ENCODE measurements at regions of chr16 and their contacts with region 1.

Region 1: GRCh38 chr16:13919683-13920509 is at the start of gene ERCC4:
- DNase-seq: peak; percentile 100
- ATAC-seq: peak; percentile 99
- total RNA-seq, gene ERCC4: 7.2 TPM

Region 2: DNA sequence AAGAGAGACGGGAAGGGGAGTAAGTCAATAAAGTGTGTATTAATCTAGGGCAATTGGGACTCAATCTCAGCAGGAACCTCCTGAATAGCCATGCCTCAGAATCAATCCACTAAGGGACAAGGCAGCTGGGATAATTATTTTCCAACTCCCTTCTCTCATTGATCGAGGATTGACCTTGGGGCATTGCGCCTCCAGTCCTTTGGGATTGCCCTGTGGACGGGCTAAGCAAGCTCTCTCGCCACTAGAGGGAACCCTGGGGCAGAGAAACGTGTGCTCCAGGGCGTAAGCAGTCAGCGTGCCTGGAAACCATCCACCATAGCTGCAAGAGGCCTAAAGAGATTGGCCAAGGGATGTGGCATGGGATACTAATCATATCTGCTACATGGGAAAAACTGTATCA is 53.8 kb before region 1 on chr16:
- intact Hi-C with region 1: loop called (anchors 2 kb)
- DNase-seq: peak; percentile 72
- ATAC-seq: peak; percentile 91

Region 3: DNA sequence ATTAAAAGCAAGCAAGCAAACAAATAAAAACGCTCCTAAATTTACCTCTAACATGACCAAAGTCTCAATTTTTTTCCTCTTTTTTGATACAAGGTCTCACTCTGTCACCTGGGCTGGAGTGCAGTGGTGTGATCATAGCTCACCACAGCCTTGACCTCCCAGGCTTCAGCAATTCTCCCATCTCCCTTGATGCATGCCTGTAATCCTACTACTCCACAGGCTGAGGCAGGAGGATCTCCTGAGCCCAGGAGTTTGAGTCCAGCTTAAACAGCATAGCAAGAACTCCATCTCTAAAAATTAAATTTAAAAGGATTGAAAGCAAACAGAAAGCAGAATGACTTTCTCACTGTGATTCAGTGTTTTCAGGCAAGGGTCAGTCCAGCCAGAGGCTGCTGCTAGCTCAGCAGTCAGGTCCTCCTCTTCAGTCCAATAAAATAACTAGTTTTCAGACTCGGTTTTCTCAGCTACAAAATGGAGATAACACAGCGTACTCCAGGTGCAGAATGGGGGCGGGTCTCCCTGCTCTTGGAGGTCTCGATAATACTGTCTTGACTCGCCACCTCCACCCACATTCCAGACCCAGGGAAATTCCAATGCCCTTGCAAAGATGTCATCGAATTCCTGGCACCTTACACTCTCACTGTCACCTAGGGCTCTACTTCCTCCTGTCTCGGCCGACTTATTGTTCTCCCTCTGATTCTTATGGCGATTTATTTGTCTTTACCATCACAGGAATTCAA is 130.6 kb after region 1 on chr16:
- intact Hi-C with region 1: no loop called
- DNase-seq: no peak
- ATAC-seq: no peak

Region 4: DNA sequence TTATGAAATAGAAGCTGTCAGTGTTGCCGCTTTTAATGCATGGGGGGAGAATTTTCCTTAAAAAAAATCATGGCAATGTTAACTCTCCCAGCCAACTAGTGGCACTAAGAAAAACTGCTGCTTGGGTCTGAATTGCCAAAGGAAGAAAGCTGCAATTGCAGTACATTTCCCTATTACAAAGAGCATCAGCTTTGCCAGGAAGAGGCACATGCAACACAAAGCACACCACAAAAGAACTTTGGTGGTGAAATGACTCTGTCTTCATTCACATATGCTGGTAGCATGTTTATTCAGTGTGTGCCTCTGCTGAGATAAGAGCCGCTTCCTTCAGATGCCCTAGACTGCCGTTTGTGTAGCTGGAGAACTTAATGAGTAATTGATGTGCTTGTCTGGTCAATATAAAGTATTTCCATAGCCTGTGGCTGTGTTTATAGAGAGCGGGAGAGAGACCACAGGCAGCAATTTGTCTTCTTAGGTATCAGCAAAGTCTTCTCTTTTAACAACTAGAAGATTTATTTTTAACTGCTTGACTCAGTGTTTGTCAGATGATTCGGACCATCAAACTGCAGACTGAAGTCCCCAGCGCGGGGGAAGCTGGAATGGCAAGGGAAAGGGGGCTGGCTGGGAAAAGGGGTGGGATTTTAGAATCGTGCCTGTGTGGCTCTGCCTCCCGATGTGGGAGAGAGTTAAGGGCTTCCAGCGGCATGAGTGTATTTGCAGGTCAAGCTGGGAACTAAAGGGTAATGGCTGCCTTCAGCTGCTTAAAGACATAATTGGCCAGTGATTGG is 266.3 kb after region 1 on chr16:
- intact Hi-C with region 1: loop called (anchors 5 kb)
- DNase-seq: no peak
- ATAC-seq: peak; percentile 63

Region 5: GRCh38 chr16:14249291-14250032 is 329.6 kb after region 1 on chr16:
- intact Hi-C with region 1: loop called (anchors 5 kb)
- DNase-seq: no peak
- ATAC-seq: no peak

Region 6: GRCh38 chr16:14285513-14286385 is 365.9 kb after region 1 on chr16:
- intact Hi-C with region 1: loop called (anchors 5 kb)
- DNase-seq: peak; percentile 94
- ATAC-seq: peak; percentile 93

Region 7: GRCh38 chr16:14632692-14633569 is 713.0 kb after region 1 on chr16 and contains the start of gene BFAR:
- intact Hi-C with region 1: loop called (anchors 10 kb)
- DNase-seq: peak; percentile 100
- ATAC-seq: peak; percentile 96
- total RNA-seq, gene BFAR: 26.0 TPM

Measured in Right ventricle myocardium inferior (tissue), 1 donor.